ENCODE measurements at regions of chr1 and their contacts with region 1.

Region 1: GRCh38 chr1:61132176-61133001 is 50.0 kb downstream of the NFIA start:
- DNase-seq: no peak
- ATAC-seq: no peak; the same call in 1 of the 2 replicates
- H3K4me3 ChIP-seq: no peak overlapping the region
- H3K27ac ChIP-seq: peak overlapping the region; percentile 48
- H3K4me1 ChIP-seq: peaks cover 14% of the 10 kb centered on the region
- H3K27me3 ChIP-seq: no peaks in the 10 kb centered on the region
- CTCF ChIP-seq: no peak

Region 2: GRCh38 chr1:60903591-60903990 is 228.8 kb before region 1 on chr1:
- CTCF ChIA-PET with region 1: no interaction called
- POLR2A ChIA-PET with region 1: no interaction called
- intact Hi-C with region 1: no loop called
- DNase-seq: no peak
- ATAC-seq: no peak
- H3K4me3 ChIP-seq: no peak overlapping the region
- H3K27ac ChIP-seq: no peak overlapping the region
- H3K4me1 ChIP-seq: no peaks in the 10 kb centered on the region
- H3K27me3 ChIP-seq: peaks cover 38% of the 10 kb centered on the region
- CTCF ChIP-seq: no peak

Region 3: GRCh38 chr1:61056573-61057439 is 75.6 kb before region 1 on chr1:
- CTCF ChIA-PET with region 1: no interaction called
- POLR2A ChIA-PET with region 1: no interaction called
- intact Hi-C with region 1: loop called (anchors 5 kb)
- DNase-seq: peak; percentile 65
- ATAC-seq: peak; percentile 83
- H3K4me3 ChIP-seq: peak overlapping the region; percentile 93
- H3K27ac ChIP-seq: peak overlapping the region; percentile 20; the same call in 1 of the 2 replicates
- H3K4me1 ChIP-seq: peaks cover 13% of the 10 kb centered on the region
- H3K27me3 ChIP-seq: no peaks in the 10 kb centered on the region
- CTCF ChIP-seq: no peak

Region 4: DNA sequence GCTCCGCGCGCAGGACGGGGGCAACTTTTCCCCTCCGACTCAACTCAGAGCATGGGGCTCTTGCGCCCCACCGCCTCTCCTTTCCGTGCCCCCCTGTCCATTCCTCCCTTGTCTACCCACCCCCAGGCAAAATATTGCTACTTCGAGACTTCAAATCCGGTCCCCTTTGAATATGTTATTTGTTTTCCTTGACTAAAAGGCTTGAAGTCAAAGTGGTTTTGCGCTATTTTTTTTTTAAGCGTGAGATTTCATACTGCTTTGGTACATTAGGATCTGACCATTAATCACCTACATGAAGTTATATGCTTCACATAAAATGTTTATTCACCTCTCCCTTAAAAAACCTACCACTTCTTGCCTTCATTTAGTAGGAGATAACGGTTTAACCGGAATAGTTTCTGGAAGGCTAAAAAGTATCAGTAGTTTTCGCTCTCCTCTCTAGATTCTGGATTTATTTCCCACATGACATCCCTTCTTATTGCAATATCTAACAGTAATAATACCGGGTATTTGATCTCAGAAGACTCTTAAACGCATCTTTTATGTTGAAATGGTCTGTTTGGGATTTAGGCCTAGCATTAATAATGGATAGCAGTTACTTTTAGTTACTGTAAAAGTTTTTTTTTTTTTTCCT is 48.5 kb before region 1 on chr1:
- CTCF ChIA-PET with region 1: no interaction called
- POLR2A ChIA-PET with region 1: no interaction called
- intact Hi-C with region 1: loop called (anchors 1 kb)
- DNase-seq: peak; percentile 30
- ATAC-seq: no peak
- H3K4me3 ChIP-seq: peak overlapping the region; percentile 74
- H3K27ac ChIP-seq: 0 out of 2 replicates have a peak overlapping the region, but pooled peaks have one; percentile 5
- H3K4me1 ChIP-seq: peaks cover 50% of the 10 kb centered on the region
- H3K27me3 ChIP-seq: no peaks in the 10 kb centered on the region
- CTCF ChIP-seq: no peak

Region 5: GRCh38 chr1:61287734-61288133 is 155.3 kb after region 1 on chr1:
- CTCF ChIA-PET with region 1: no interaction called
- POLR2A ChIA-PET with region 1: no interaction called
- intact Hi-C with region 1: loop called (anchors 1 kb)
- DNase-seq: peak; percentile 95
- ATAC-seq: peak; percentile 84
- H3K4me3 ChIP-seq: no peak overlapping the region
- H3K27ac ChIP-seq: peak overlapping the region; percentile 90
- H3K4me1 ChIP-seq: peaks cover 37% of the 10 kb centered on the region
- H3K27me3 ChIP-seq: no peaks in the 10 kb centered on the region
- CTCF ChIP-seq: no peak